Gastrocnemius medialis (tissue), 4 donors: ENCODE measurements at regions of chr15 and their contacts with region 1.

Region 1: GRCh38 chr15:55917881-55918296 is 75.5 kb downstream of the NEDD4 start:
- DNase-seq: peak in 1 of 2 donors; percentile 37
- ATAC-seq: peak; percentile 49 to 63
- H3K4me3 ChIP-seq: peak overlapping the region; percentile 19 to 68 (median 63)
- H3K27ac ChIP-seq: peak overlapping the region; percentile 84 to 94 (median 88)
- H3K4me1 ChIP-seq: peaks cover 0 to 8% of the 10 kb centered on the region in 2 donors
- H3K27me3 ChIP-seq: no peaks in the 10 kb centered on the region
- CTCF ChIP-seq: peak in 4 of 5 experiments; percentile 45 to 78 (median 66)
- POLR2A ChIP-seq: no peak

Region 2: GRCh38 chr15:55627730-55628368 is 290.0 kb before region 1 on chr15:
- in situ Hi-C with region 1: loop called in 2 of 4 experiments (anchors 25 kb)
- intact Hi-C with region 1: no loop called
- DNase-seq: peak; percentile 85 to 92
- ATAC-seq: peak; percentile 90 to 92
- H3K4me3 ChIP-seq: peak overlapping the region in 3 of 4 donors; percentile 25 to 46 (median 43)
- H3K27ac ChIP-seq: peak overlapping the region; percentile 88 to 97 (median 94)
- H3K4me1 ChIP-seq: peaks cover 30 to 38% of the 10 kb centered on the region in 2 donors
- H3K27me3 ChIP-seq: no peaks in the 10 kb centered on the region
- CTCF ChIP-seq: no peak
- POLR2A ChIP-seq: peak; percentile 63 to 82

Region 3: GRCh38 chr15:55846116-55846707 is 71.7 kb before region 1 on chr15:
- in situ Hi-C with region 1: no loop called
- intact Hi-C with region 1: loop called (anchors 1 kb)
- DNase-seq: no peak
- ATAC-seq: peak; percentile 55 to 59
- H3K4me3 ChIP-seq: no peak overlapping the region
- H3K27ac ChIP-seq: peak overlapping the region in 1 of 4 donors; percentile 59
- H3K4me1 ChIP-seq: no peaks in the 10 kb centered on the region
- H3K27me3 ChIP-seq: no peaks in the 10 kb centered on the region
- CTCF ChIP-seq: peak; percentile 63 to 84 (median 78)
- POLR2A ChIP-seq: no peak

Region 4: GRCh38 chr15:55868707-55869106 is 49.2 kb before region 1 on chr15:
- in situ Hi-C with region 1: no loop called
- intact Hi-C with region 1: loop called (anchors 1 kb)
- DNase-seq: peak in 1 of 2 donors; percentile 53
- ATAC-seq: peak; percentile 95 to 96
- H3K4me3 ChIP-seq: no peak overlapping the region
- H3K27ac ChIP-seq: peak overlapping the region; percentile 76 to 87 (median 83)
- H3K4me1 ChIP-seq: peaks cover 51 to 59% of the 10 kb centered on the region in 2 donors
- H3K27me3 ChIP-seq: no peaks in the 10 kb centered on the region
- CTCF ChIP-seq: no peak
- POLR2A ChIP-seq: no peak

Region 5: GRCh38 chr15:56098195-56098863 is 180.4 kb after region 1 on chr15:
- in situ Hi-C with region 1: no loop called
- intact Hi-C with region 1: loop called (anchors 10 kb)
- DNase-seq: no peak
- ATAC-seq: no peak
- H3K4me3 ChIP-seq: peak overlapping the region in 1 of 4 donors; percentile 5
- H3K27ac ChIP-seq: peak overlapping the region; percentile 80 to 92 (median 86)
- H3K4me1 ChIP-seq: peaks cover 43 to 50% of the 10 kb centered on the region in 2 donors
- H3K27me3 ChIP-seq: no peaks in the 10 kb centered on the region
- CTCF ChIP-seq: peak in 2 of 5 experiments; percentile 8 to 13
- POLR2A ChIP-seq: no peak